Activated CD4-positive, alpha-beta memory T cell treated with anti-CD3 and anti-CD28 coated beads for 36 hours (primary cell): ENCODE measurements at regions of chrX and their contacts with region 1.

Region 1: DNA sequence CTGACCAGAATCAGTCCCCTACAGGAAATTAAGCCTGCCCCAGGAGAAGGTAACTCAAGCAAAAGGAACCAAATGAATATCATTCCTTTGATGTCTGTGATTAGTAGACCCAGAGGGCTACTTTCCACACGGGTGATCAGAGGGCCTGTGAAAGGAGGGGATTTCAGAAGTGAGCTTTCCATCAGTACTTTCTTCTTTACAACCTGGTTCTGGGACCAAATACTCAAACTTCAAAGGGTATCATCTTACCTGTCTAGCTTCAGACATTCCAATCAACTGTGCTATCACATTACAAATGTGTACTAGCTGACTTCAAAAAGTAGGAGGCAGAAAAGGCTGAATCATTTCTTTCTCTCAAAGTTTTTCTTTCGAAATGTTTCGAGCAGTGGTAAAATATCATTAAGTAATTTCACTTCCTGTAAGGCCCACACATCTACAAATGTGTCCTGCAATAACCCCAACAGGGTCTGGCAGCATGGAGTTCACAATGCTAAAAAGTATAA is 23.9 kb downstream of the ACSL4 start:
- DNase-seq: no peak
- H3K4me3 Mint-ChIP-seq: no peak overlapping the region
- H3K27ac Mint-ChIP-seq: peak overlapping the region; percentile 46
- H3K4me1 Mint-ChIP-seq: peaks cover 64% of the 10 kb centered on the region
- H3K27me3 Mint-ChIP-seq: no peaks in the 10 kb centered on the region

Region 2: DNA sequence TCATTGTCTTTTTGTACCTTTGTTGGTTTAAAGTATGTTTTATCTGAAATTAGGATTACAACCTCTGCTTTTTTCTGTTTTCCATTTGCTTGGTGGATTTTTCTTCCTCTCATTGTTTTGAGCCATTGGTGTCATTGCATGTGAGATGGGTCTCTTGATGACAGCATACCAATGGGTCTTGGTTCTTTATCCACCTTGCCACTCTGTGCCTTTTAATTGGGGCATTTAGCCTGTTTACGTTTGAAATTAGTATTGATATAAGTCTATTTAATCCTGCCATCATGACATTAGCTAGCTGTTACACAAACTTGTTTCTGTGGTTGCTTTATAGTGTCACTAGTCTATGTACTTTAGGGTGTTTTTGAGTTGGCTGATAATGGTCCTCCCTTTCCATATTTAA is 373.0 kb before region 1 on chrX:
- CTCF ChIA-PET with region 1: no interaction called
- POLR2A ChIA-PET with region 1: no interaction called
- intact Hi-C with region 1: no loop called
- DNase-seq: no peak
- H3K4me3 Mint-ChIP-seq: no peak overlapping the region
- H3K27ac Mint-ChIP-seq: no peak overlapping the region
- H3K4me1 Mint-ChIP-seq: no peaks in the 10 kb centered on the region
- H3K27me3 Mint-ChIP-seq: no peaks in the 10 kb centered on the region

Region 3: DNA sequence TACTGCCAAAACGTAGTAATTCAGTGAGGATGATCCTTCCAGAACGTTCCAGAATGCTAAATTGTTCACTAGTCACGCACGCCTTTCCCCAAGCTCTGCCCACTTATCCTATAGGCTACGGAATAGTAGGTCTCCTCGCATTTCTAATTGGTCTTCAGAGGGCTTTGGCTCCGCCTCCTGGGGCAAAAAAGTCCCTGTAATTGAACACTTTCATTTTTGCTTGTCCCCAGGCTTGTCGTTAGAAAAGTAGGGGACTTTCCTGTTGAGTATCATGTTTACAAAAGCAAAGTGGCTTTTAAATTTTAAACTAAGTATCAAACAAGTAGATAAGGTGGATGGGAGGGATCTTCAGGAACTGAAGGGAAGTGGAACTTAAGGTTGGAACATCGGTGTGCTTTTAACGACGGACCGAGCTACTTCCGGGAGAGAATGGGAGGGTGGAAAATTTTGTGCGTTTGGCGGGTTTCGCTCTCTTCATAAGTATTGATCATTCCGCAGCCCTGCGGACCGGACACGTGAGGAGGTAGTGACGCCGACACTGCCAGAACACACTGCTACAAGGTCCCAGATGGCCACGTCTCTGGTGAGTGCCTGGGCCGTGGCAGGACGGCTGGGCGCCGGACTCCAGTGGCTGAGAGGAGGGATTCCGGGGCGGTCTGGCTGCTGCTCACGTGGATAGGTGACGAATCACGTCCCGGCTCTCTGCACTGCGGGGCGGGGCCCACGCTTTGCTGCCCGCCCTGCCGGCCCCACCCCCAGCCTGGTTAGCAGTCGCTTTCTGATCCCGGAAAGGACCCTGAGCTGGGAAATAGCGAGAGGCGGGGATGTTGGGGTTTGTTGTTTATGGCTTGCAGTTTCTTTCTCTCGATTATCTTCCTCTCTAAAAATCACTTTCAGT is 172.5 kb before region 1 on chrX and contains the start of gene NXT2:
- CTCF ChIA-PET with region 1: no interaction called
- POLR2A ChIA-PET with region 1: no interaction called
- intact Hi-C with region 1: no loop called
- DNase-seq: peak; percentile 90
- H3K4me3 Mint-ChIP-seq: peak within 1 kb of the TSS; percentile 90
- H3K27ac Mint-ChIP-seq: peak within 1 kb of the TSS; percentile 97
- H3K4me1 Mint-ChIP-seq: peaks cover 12% of the 10 kb centered on the region
- H3K27me3 Mint-ChIP-seq: peaks cover 6% of the 10 kb centered on the region
- total RNA-seq, gene NXT2: 12.6 to 13.9 TPM

Region 4: GRCh38 chrX:109684136-109684535 is 25.0 kb before region 1 on chrX:
- CTCF ChIA-PET with region 1: interaction called, 3 read pairs
- POLR2A ChIA-PET with region 1: no interaction called
- intact Hi-C with region 1: loop called (anchors 1 kb)
- DNase-seq: no peak
- H3K4me3 Mint-ChIP-seq: no peak overlapping the region
- H3K27ac Mint-ChIP-seq: no peak overlapping the region
- H3K4me1 Mint-ChIP-seq: peaks cover 18% of the 10 kb centered on the region
- H3K27me3 Mint-ChIP-seq: no peaks in the 10 kb centered on the region

Region 5: GRCh38 chrX:109840585-109840984 is 131.4 kb after region 1 on chrX:
- CTCF ChIA-PET with region 1: interaction called, 5 read pairs
- POLR2A ChIA-PET with region 1: no interaction called
- intact Hi-C with region 1: loop called (anchors 1 kb)
- DNase-seq: peak; percentile 18
- H3K4me3 Mint-ChIP-seq: no peak overlapping the region
- H3K27ac Mint-ChIP-seq: no peak overlapping the region
- H3K4me1 Mint-ChIP-seq: peaks cover 3% of the 10 kb centered on the region
- H3K27me3 Mint-ChIP-seq: no peaks in the 10 kb centered on the region

Region 6: DNA sequence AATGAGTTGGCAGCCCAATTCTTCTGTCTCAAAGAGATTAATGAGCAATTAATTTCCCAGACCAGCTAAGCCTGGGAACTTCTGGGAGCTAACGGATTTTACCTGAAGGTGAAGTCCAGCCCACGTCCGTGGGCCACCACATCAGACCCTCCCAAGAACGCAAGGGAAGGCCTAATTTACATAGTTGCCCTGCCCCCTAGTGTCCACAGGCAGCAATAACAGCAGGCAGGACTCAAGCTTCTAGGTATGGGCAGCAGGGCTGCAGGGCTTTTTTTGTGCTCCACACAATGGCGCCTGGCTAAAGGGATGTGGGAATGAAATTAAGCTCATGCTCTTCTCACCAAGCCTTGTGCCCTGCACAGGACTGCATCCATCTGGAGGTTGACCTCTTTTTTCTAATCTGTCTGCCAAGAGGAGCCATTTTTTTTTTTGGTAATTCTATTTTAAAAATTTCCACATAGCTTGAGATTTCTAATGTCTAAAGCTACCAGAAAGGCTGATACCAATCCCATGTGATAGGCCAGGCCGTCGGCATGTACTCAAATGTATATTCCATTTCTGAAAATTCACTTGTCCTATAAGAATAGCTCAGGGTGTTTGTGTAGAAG is 181.8 kb after region 1 on chrX:
- CTCF ChIA-PET with region 1: interaction called, 24 read pairs
- POLR2A ChIA-PET with region 1: no interaction called
- intact Hi-C with region 1: loop called (anchors 1 kb)
- DNase-seq: peak; percentile 52
- H3K4me3 Mint-ChIP-seq: no peak overlapping the region
- H3K27ac Mint-ChIP-seq: no peak overlapping the region
- H3K4me1 Mint-ChIP-seq: no peaks in the 10 kb centered on the region
- H3K27me3 Mint-ChIP-seq: no peaks in the 10 kb centered on the region

Region 7: DNA sequence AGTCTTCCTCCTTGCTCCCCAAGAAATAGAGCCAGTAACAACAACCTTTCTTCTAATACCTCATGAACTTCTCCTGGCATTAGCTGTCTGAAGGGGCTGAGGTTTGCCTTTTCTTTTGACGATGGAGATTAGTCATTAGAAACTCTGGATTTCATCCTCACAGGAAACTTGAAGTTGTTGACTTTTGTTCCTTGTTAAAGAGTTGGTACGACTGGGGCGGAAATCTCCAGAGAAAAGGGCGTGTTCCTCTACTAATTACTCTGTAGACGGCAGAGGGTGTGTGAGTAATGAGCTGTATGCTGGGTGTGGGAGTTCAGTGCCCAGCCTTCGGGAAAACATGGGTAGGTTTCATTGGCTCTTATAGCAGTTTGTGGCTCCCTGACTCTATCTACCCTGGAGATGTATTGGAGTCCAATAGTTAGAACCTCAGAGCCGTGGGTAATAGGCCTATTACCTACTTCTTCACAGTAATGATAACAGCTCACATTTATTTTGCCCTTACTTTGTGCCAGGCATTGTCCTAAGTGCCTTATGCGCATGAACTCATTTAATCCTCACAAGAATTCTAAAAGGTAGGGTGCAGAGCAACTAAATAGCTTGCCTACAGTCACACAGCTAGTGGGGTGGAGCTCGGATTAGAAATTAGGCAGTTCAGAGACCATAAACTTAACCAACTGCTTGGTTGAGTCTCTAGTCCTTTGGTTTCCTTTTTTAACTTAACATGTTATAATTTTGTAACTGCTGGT is 317.1 kb after region 1 on chrX:
- CTCF ChIA-PET with region 1: no interaction called
- POLR2A ChIA-PET with region 1: no interaction called
- intact Hi-C with region 1: no loop called
- DNase-seq: no peak
- H3K4me3 Mint-ChIP-seq: no peak overlapping the region
- H3K27ac Mint-ChIP-seq: no peak overlapping the region
- H3K4me1 Mint-ChIP-seq: peaks cover 17% of the 10 kb centered on the region
- H3K27me3 Mint-ChIP-seq: no peaks in the 10 kb centered on the region